Thyroid gland (tissue), 4 donors: ENCODE measurements at regions of chr6 and their contacts with region 1.

Region 1: GRCh38 chr6:70884074-70884983 is 72.5 kb downstream of the B3GAT2 start:
- DNase-seq: peak; percentile 54 to 59
- H3K4me3 ChIP-seq: no peak overlapping the region
- H3K27ac ChIP-seq: no peak overlapping the region
- H3K4me1 ChIP-seq: peaks cover 0 to 4% of the 10 kb centered on the region in 2 donors
- H3K27me3 ChIP-seq: no peaks in the 10 kb centered on the region
- CTCF ChIP-seq: peak; percentile 68 to 96 (median 90)
- POLR2A ChIP-seq: no peak

Region 2: GRCh38 chr6:70709826-70710225 is 174.5 kb before region 1 on chr6:
- intact Hi-C with region 1: loop called (anchors 2 kb)
- DNase-seq: no peak
- H3K4me3 ChIP-seq: no peak overlapping the region
- H3K27ac ChIP-seq: no peak overlapping the region
- H3K4me1 ChIP-seq: no peaks in the 10 kb centered on the region
- H3K27me3 ChIP-seq: no peaks in the 10 kb centered on the region
- CTCF ChIP-seq: no peak
- POLR2A ChIP-seq: no peak